ENCODE measurements at regions of chr4 and their contacts with region 1.

Region 1: GRCh38 chr4:94678896-94679295 is 78.9 kb upstream of the BMPR1B start:
- DNase-seq: no peak
- H3K4me3 ChIP-seq: no peak overlapping the region
- H3K27ac ChIP-seq: no peak overlapping the region
- H3K4me1 ChIP-seq: no peaks in the 10 kb centered on the region
- H3K27me3 ChIP-seq: no peaks in the 10 kb centered on the region
- CTCF ChIP-seq: no peak
- POLR2A ChIP-seq: no peak

Region 2: DNA sequence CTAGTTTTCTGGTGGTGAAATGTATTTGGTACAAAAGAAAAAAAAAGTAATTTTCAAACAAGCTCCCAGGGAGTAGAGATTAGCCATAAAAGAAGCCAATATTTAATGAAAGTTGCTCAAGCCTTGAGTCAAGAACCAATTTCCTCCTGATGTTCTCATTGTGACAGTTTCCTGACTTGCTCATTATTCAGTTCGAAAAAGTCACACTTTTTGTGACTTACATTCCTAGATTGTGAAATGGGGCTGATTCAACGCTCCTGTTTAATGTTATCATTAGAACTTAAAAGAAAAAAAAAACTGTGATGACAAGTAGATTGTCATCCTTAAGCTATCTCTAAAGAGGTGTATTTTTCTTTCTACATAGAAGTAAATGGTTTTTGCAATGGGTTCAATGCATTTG is 43.7 kb before region 1 on chr4:
- intact Hi-C with region 1: no loop called
- DNase-seq: no peak
- H3K4me3 ChIP-seq: no peak overlapping the region
- H3K27ac ChIP-seq: no peak overlapping the region
- H3K4me1 ChIP-seq: no peaks in the 10 kb centered on the region
- H3K27me3 ChIP-seq: no peaks in the 10 kb centered on the region
- CTCF ChIP-seq: no peak
- POLR2A ChIP-seq: no peak

Region 3: DNA sequence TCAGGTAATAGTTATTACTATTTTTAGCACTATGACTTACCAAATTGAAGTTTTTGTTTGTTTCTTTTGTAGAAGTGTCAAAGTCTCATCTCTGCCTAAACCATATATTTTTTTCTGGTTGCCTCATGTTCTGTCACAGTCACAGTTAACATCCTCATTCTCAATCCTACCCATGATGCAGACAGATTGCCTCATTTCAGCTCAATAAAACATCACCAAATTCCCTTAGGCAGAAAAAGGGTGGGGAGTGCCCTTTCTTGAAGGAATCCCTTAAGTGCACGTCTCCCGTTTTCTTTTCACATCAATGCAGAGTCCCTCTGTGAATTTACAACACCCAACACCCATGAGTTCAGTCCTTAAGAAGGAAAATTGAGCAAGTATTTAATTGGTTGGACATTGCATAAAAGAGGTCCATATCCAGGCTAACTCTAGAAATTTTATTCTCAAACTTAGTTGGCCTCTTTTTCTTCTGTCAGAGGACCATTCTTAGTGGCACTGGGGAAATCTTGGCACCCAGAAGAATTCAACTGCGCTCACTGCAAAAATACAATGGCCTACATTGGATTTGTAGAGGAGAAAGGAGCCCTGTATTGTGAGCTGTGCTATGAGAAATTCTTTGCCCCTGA is 24.8 kb before region 1 on chr4:
- intact Hi-C with region 1: loop called (anchors 2 kb)
- DNase-seq: no peak
- H3K4me3 ChIP-seq: no peak overlapping the region
- H3K27ac ChIP-seq: no peak overlapping the region
- H3K4me1 ChIP-seq: no peaks in the 10 kb centered on the region
- H3K27me3 ChIP-seq: no peaks in the 10 kb centered on the region
- CTCF ChIP-seq: no peak
- POLR2A ChIP-seq: no peak